Mammary epithelial cell (primary cell): ENCODE measurements at regions of chr1 and their contacts with region 1.

Region 1: DNA sequence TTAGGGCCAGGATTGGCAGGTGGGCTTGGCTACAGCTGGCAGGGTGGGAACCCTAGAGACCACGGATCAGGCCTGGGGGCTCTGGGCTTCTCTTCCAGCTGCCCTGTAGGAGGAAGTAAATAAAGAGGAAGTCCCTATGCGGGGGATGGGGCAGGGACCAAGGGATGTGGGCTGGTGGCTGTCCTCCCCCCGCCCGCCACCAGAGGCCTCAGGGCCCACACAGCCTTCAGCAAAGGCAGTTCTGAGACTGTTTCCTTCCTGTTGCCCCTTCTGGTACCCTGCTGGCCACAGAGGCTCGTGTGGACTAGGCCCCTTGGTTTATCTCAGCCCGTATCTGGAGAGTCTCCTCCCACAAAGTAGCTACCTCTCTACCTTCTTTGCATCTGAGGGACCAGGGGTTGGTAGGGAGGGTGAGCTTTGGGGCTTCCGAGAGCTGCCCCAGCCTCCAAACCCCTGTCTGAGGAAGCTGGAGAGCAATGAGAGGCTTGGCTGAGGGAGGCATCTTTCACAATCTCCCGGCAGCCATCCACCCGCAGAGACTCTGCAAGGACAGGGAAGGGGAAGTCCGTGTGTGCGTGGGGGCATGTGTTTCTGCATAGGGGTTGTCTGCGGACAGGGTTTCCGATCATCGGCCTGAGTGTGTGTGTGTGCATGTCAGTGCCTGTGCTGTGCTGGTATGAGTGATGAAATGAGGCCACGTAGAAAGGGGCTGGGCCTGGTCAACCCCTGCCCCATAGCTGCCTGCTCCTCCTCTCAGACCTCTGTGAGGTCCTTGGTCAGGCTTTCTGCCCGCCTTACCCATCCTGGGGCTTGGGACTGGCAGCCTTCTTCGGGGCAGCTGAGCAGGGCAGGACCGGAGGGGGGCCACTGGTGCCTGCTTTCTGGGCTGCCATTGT is 12.5 kb downstream of the RPS6KA1 start:
- DNase-seq: peak; percentile 92
- H3K4me3 ChIP-seq: no peak overlapping the region
- H3K27ac ChIP-seq: peak overlapping the region; percentile 49
- H3K4me1 ChIP-seq: peaks cover 60% of the 10 kb centered on the region
- H3K27me3 ChIP-seq: no peaks in the 10 kb centered on the region
- CTCF ChIP-seq: peak; percentile 24 to 31

Region 2: DNA sequence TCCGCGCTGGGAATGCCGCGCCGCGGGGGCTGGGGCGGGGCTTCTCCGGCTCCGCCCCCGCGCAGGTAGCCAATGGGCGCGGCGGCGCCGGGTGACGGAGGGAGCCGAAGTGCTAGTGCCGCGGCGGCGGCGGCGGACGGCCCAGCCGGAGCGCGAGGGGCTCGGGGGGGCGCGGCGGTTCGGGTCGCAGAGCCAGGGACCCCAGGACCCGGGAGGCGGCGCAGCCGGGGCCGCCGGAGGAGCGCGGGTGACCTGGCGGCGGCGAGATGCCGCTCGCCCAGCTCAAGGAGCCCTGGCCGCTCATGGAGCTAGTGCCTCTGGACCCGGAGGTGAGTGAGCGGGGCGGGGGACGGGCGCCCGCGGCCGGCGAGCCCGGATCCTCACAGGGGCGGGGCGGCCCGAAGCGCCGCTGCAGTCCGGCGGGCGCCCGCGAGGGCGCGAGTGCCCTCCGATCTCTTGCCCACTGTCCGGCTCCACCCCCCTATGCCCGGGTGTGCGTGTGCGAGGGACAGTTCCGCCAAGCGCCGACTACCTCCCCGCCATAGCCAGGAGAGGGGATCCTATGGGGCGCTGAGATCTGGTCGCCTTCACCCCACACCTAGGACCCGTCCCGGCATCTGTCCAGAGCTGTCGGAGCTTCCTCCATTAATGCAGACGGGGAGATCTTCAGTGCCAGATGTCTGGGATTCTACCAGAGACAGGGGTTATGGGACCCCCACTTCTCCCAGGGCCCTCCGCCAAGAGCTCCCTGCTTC is 12.2 kb before region 1 on chr1 and contains the start of gene RPS6KA1:
- CTCF ChIA-PET with region 1: no interaction called
- dilution Hi-C with region 1: no loop called
- in situ Hi-C with region 1: no loop called
- intact Hi-C with region 1: loop called (anchors 1 kb)
- DNase-seq: peak; percentile 60
- H3K4me3 ChIP-seq: peak within 1 kb of the TSS; percentile 68 to 90 (median 77)
- H3K27ac ChIP-seq: peak within 1 kb of the TSS; percentile 83
- H3K4me1 ChIP-seq: peaks cover 22% of the 10 kb centered on the region
- H3K27me3 ChIP-seq: no peaks in the 10 kb centered on the region
- CTCF ChIP-seq: no peak
- total RNA-seq, gene RPS6KA1: 107 to 142 TPM

Region 3: DNA sequence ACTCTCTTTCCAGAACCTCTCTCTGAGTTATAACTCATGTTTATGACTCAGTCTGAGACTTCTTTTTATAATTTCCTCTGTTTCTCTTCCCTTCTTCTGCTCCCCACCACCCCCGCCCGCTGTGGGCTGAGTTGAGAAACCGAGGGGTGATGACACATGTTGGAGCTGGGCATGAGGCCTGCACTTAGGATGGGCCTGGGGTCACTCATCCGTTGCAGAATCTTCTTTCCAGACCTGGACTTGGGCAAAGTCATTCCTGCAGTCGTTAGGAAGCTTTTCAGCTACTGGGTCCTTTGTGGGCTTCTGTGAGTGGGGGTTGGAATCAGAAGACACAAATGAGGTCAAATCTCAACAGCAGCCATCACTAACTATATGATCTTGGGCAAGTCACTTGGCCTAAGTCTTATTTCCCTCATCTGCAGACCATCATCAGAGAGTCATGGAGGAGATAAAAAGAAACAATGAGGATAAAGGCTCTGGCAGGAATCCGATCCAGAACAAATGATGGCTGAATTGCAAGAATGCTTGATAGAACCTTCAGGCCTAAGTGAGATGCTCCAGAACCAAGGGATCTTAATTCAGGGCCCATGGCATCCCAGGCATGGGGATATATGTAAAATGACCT is 40.9 kb after region 1 on chr1:
- CTCF ChIA-PET with region 1: no interaction called
- dilution Hi-C with region 1: loop called (anchors 5 kb)
- in situ Hi-C with region 1: no loop called
- intact Hi-C with region 1: no loop called
- DNase-seq: peak; percentile 11
- H3K4me3 ChIP-seq: no peak overlapping the region
- H3K27ac ChIP-seq: no peak overlapping the region
- H3K4me1 ChIP-seq: no peaks in the 10 kb centered on the region
- H3K27me3 ChIP-seq: no peaks in the 10 kb centered on the region
- CTCF ChIP-seq: no peak

Region 4: DNA sequence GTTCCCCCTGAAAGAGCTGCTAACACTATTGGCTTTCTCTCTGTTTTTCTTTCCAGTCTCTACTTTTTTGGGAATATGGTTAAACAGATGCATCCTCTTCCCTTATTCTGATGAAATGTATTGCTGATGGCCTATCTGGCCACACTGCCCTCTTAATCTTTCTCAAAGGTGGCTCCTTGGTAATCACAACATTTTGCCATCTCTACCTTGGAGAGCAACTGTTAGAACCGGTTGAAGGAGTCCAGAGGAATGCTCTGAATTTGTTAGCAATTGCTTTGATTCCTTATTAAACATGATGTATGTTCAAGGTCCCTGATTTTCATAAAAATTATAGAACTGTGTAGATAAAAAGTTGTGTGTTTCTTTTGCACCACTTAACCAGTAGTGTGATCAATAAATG is 103.7 kb after region 1 on chr1:
- CTCF ChIA-PET with region 1: no interaction called
- dilution Hi-C with region 1: loop called (anchors 5 kb)
- in situ Hi-C with region 1: no loop called
- intact Hi-C with region 1: no loop called
- DNase-seq: no peak
- H3K4me3 ChIP-seq: no peak overlapping the region
- H3K27ac ChIP-seq: no peak overlapping the region
- H3K4me1 ChIP-seq: no peaks in the 10 kb centered on the region
- H3K27me3 ChIP-seq: no peaks in the 10 kb centered on the region
- CTCF ChIP-seq: no peak